CD4-positive, alpha-beta memory T cell (primary cell): ENCODE measurements at regions of chr10 and their contacts with region 1.

Region 1: DNA sequence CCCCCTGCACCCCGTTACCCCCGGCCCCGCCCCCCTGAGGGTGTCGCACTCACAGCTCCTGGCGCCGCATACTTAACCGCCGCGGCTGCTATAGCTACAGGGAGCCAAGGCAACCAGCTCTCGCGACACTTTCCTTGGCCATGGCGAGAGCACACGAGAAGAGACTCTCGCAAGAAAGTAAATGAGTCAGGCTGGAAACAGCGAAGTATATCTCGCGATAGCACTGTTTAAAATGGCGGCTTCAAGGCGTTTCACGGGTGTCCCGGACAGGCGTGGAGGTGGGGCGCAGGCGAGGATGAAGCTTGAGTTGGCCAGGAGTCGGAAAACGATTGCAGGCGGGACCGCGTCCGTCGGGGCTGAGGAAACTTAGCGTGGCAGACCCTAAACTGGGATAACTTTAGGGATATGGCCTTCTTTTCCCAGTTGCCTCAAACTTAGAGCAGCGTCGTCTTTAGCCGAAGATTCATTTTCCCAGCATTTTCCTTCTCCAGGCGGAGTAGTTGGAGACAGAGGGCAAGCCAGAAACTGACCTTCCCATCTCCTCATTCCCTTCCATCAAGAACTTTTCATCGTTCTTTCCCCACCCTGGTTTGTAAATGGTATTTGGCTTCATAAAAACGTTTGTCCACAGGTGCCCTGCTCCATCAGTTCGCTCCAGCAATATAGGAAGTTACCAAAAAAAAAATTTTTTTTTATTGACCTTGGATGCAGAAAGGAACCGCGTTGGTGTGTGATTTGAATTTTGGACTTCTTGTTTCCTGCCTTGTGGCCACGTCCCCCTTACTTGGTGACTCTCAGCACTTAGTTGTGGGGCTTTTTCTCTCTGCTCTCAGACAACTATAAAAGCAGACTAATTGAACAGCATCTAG is 15.2 kb downstream of the MYOZ1 start:
- DNase-seq: peak; percentile 92 to 97 (median 94)
- H3K4me3 ChIP-seq: peak overlapping the region; percentile 74 to 95
- H3K4me3 Mint-ChIP-seq: peak overlapping the region; percentile 90 to 99 (median 96)
- H3K27ac ChIP-seq: peak overlapping the region; percentile 76
- H3K27ac Mint-ChIP-seq: peak overlapping the region; percentile 82 to 100 (median 98)
- H3K4me1 ChIP-seq: peaks cover 16% of the 10 kb centered on the region
- H3K4me1 Mint-ChIP-seq: peaks cover 5 to 26% (median 16%) of the 10 kb centered on the region in 4 donors
- H3K27me3 ChIP-seq: no peaks in the 10 kb centered on the region
- H3K27me3 Mint-ChIP-seq: no peaks in the 10 kb centered on the region

Region 2: GRCh38 chr10:72862957-72863356 is 763.2 kb before region 1 on chr10:
- CTCF ChIA-PET with region 1: no interaction called
- POLR2A ChIA-PET with region 1: no interaction called
- intact Hi-C with region 1: no loop called
- DNase-seq: no peak
- H3K4me3 ChIP-seq: no peak overlapping the region
- H3K4me3 Mint-ChIP-seq: no peak overlapping the region
- H3K27ac ChIP-seq: no peak overlapping the region
- H3K27ac Mint-ChIP-seq: peak overlapping the region in 1 of 7 donors; percentile 7
- H3K4me1 ChIP-seq: no peaks in the 10 kb centered on the region
- H3K4me1 Mint-ChIP-seq: no peaks in the 10 kb centered on the region
- H3K27me3 ChIP-seq: no peaks in the 10 kb centered on the region
- H3K27me3 Mint-ChIP-seq: no peaks in the 10 kb centered on the region

Region 3: DNA sequence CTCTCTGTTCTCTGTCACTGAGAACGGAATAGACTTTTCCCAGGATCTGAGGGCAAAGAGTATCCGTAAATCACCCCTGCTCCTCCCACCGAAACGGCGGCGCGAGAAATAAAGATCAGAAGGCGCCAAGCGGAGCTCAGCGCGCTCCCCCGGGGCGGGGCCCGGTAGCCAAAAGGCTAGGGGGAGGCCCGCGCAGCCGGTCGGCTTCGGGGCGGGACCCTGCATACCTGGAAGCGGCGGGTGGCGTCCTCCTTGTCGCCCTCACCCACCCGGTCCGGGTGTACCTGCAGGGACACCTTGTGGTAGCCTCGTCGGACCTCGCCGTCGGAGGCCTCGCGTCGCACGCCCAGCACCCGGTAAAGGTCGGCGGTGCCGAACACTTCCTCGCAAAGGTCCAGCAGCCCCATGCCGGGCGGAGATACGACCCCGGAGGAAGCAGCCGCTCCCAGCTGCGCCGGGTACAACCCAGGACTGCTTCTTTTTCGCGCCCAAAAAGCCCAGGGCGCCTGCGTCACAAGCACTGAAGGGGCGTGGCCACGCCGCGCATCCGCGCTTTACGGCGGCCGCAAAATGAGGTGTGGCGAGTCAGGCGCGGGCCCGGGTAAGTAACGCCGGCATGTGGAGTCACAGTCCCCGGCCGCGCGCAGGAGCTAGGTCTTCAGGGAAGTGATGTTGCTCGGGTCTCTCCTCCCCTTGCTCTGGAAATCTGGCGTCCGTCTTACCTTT is 379.2 kb before region 1 on chr10 and contains the start of gene DNAJC9:
- CTCF ChIA-PET with region 1: no interaction called
- POLR2A ChIA-PET with region 1: no interaction called
- intact Hi-C with region 1: loop called (anchors 2 kb)
- DNase-seq: peak; percentile 95 to 98 (median 96)
- H3K4me3 ChIP-seq: peak within 1 kb of the TSS; percentile 53 to 87
- H3K4me3 Mint-ChIP-seq: peak within 1 kb of the TSS; percentile 96 to 99 (median 97)
- H3K27ac ChIP-seq: peak within 1 kb of the TSS; percentile 82
- H3K27ac Mint-ChIP-seq: peak within 1 kb of the TSS; percentile 94 to 99 (median 98)
- H3K4me1 ChIP-seq: peaks cover 50% of the 10 kb centered on the region
- H3K4me1 Mint-ChIP-seq: peaks cover 35 to 74% (median 56%) of the 10 kb centered on the region in 4 donors
- H3K27me3 ChIP-seq: no peaks in the 10 kb centered on the region
- H3K27me3 Mint-ChIP-seq: no peaks in the 10 kb centered on the region
- total RNA-seq, gene DNAJC9: 31.6 to 31.7 TPM

Region 4: GRCh38 chr10:73413528-73414229 is 212.4 kb before region 1 on chr10 and contains the start of gene ANXA7:
- CTCF ChIA-PET with region 1: no interaction called
- POLR2A ChIA-PET with region 1: interaction called, 9 read pairs
- intact Hi-C with region 1: loop called (anchors 5 kb)
- DNase-seq: peak; percentile 85 to 93 (median 88)
- H3K4me3 ChIP-seq: peak within 1 kb of the TSS; percentile 59 to 82
- H3K4me3 Mint-ChIP-seq: peak within 1 kb of the TSS; percentile 91 to 99 (median 97)
- H3K27ac ChIP-seq: peak within 1 kb of the TSS; percentile 98
- H3K27ac Mint-ChIP-seq: peak within 1 kb of the TSS; percentile 88 to 98 (median 93)
- H3K4me1 ChIP-seq: peaks cover 46% of the 10 kb centered on the region
- H3K4me1 Mint-ChIP-seq: peaks cover 38 to 59% (median 48%) of the 10 kb centered on the region in 4 donors
- H3K27me3 ChIP-seq: no peaks in the 10 kb centered on the region
- H3K27me3 Mint-ChIP-seq: peaks cover 0 to 2% of the 10 kb centered on the region in 2 donors
- total RNA-seq, gene ANXA7: 103 to 111 TPM

Region 5: DNA sequence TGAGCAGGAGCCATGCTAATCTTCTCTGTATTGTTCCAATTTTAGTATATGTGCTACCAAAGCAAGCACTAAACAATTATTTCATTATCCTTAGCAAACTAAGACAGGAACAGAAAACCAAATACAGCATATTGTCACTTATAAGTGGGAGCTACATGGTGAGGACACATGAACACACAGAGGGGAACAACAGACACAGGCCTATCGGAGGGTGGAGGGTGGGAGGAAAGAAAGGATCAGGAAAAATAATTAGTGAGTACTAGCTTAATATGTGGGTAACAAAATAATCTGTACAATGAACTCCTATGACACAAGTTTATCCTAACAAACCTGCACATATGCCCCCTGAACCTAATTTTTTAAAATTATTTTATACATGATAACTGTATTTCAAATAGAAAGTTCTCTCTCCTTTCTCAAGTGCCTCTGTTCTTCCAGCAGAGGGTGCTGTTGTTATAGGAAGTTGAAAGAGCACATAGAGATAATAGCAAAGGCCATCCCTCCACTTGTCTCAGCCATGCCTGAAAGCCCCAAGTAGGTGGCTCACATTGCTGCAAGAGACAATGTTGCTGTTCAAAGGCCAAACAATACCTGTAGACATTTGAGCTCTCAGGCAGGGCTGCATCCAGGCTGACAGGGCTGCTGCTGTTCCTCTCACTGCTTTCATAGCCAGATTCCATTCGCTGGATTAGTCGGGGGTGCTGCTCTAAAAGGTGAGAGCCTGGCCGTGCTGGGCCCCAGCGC is 96.9 kb before region 1 on chr10:
- CTCF ChIA-PET with region 1: interaction called, 7 read pairs
- POLR2A ChIA-PET with region 1: no interaction called
- intact Hi-C with region 1: loop called (anchors 5 kb)
- DNase-seq: peak; percentile 57 to 77 (median 72)
- H3K4me3 ChIP-seq: no peak overlapping the region
- H3K4me3 Mint-ChIP-seq: no peak overlapping the region
- H3K27ac ChIP-seq: no peak overlapping the region
- H3K27ac Mint-ChIP-seq: no peak overlapping the region
- H3K4me1 ChIP-seq: no peaks in the 10 kb centered on the region
- H3K4me1 Mint-ChIP-seq: no peaks in the 10 kb centered on the region
- H3K27me3 ChIP-seq: no peaks in the 10 kb centered on the region
- H3K27me3 Mint-ChIP-seq: no peaks in the 10 kb centered on the region

Region 6: DNA sequence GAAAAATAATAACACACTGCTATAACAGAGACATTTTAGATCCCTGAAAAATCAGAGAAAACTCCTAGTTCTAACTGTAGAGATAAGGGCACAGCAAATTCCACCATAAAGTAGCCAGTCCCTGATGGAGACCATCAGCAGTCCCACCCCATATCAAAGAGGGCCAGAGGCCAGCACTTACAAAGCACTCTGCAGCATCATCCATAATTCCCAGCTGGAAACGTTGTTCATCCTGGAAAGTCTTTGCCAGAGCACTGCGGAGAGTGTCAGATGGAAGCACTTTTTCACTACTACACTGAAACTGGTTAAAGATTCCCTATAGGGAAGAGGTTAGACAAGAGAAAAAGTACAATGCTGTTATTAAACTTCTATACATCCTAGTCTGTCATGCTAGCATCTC is 80.8 kb before region 1 on chr10:
- CTCF ChIA-PET with region 1: no interaction called
- POLR2A ChIA-PET with region 1: no interaction called
- intact Hi-C with region 1: no loop called
- DNase-seq: no peak
- H3K4me3 ChIP-seq: no peak overlapping the region
- H3K4me3 Mint-ChIP-seq: no peak overlapping the region
- H3K27ac ChIP-seq: no peak overlapping the region
- H3K27ac Mint-ChIP-seq: no peak overlapping the region
- H3K4me1 ChIP-seq: no peaks in the 10 kb centered on the region
- H3K4me1 Mint-ChIP-seq: no peaks in the 10 kb centered on the region
- H3K27me3 ChIP-seq: no peaks in the 10 kb centered on the region
- H3K27me3 Mint-ChIP-seq: no peaks in the 10 kb centered on the region

Region 7: GRCh38 chr10:73609116-73609515 is 17.0 kb before region 1 on chr10:
- CTCF ChIA-PET with region 1: no interaction called
- POLR2A ChIA-PET with region 1: interaction called, 11 read pairs
- intact Hi-C with region 1: no loop called
- DNase-seq: no peak
- H3K4me3 ChIP-seq: no peak overlapping the region
- H3K4me3 Mint-ChIP-seq: no peak overlapping the region
- H3K27ac ChIP-seq: no peak overlapping the region
- H3K27ac Mint-ChIP-seq: no peak overlapping the region
- H3K4me1 ChIP-seq: no peaks in the 10 kb centered on the region
- H3K4me1 Mint-ChIP-seq: no peaks in the 10 kb centered on the region
- H3K27me3 ChIP-seq: no peaks in the 10 kb centered on the region
- H3K27me3 Mint-ChIP-seq: no peaks in the 10 kb centered on the region

Region 8: GRCh38 chr10:73644015-73644743 is 18.1 kb after region 1 on chr10:
- CTCF ChIA-PET with region 1: interaction called, 6 read pairs
- POLR2A ChIA-PET with region 1: interaction called, 3 read pairs
- intact Hi-C with region 1: loop called (anchors 1 kb)
- DNase-seq: peak; percentile 49 to 65 (median 63)
- H3K4me3 ChIP-seq: no peak overlapping the region
- H3K4me3 Mint-ChIP-seq: peak overlapping the region in 3 of 8 donors; percentile 7 to 26 (median 21)
- H3K27ac ChIP-seq: no peak overlapping the region
- H3K27ac Mint-ChIP-seq: peak overlapping the region; percentile 3 to 82 (median 49)
- H3K4me1 ChIP-seq: no peaks in the 10 kb centered on the region
- H3K4me1 Mint-ChIP-seq: peaks cover 3 to 8% (median 7%) of the 10 kb centered on the region in 4 donors
- H3K27me3 ChIP-seq: no peaks in the 10 kb centered on the region
- H3K27me3 Mint-ChIP-seq: peaks cover 3 to 14% of the 10 kb centered on the region in 2 donors

Region 9: DNA sequence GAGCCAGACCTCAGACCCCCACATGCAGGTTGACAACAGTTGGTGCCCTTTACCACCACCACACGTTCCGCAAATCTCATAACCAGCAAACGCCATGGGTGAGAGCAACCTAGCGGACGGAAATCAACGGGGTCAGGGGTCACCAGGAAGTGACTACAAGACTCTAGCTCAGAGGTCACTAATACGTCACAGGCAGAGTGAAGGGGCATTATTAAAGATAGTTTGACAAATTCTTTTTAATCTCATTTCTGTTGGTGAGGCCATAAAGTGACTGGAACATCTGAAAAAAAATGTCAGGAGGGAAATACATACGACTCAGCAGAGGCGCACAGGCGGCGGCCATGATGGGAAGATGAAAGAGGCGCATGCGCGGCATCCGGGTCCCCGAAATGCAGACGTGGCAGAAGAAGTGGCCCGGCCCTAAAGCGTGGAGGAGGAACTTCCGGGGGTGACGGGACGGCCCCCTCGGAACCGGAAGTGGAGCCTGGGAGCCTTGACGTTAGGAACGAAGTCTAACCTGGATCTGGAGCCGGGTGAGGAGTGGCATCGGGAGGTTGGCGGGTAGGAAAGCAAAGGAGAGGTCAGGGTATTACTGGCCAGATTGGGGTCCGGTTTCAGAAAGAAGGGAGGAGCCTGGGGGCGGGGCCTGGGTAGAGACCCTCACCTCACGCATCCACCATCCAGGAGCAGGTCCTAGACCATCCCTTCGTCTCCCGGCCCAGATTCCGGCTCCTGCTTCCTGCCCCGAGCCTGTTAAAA is 118.0 kb after region 1 on chr10 and contains the start of gene SEC24C:
- CTCF ChIA-PET with region 1: no interaction called
- POLR2A ChIA-PET with region 1: interaction called, 5 read pairs
- intact Hi-C with region 1: loop called (anchors 1 kb)
- DNase-seq: peak; percentile 95 to 96 (median 96)
- H3K4me3 ChIP-seq: peak within 1 kb of the TSS; percentile 95
- H3K4me3 Mint-ChIP-seq: peak within 1 kb of the TSS; percentile 99 to 100 (median 100)
- H3K27ac ChIP-seq: peak within 1 kb of the TSS; percentile 97
- H3K27ac Mint-ChIP-seq: peak within 1 kb of the TSS; percentile 99 to 100 (median 100)
- H3K4me1 ChIP-seq: peaks cover 38% of the 10 kb centered on the region
- H3K4me1 Mint-ChIP-seq: peaks cover 20 to 47% (median 33%) of the 10 kb centered on the region in 4 donors
- H3K27me3 ChIP-seq: no peaks in the 10 kb centered on the region
- H3K27me3 Mint-ChIP-seq: no peaks in the 10 kb centered on the region
- total RNA-seq, gene SEC24C: 126 to 127 TPM